Thyroid gland (tissue), 4 donors: ENCODE measurements at regions of chr4 and their contacts with region 1.

Region 1: DNA sequence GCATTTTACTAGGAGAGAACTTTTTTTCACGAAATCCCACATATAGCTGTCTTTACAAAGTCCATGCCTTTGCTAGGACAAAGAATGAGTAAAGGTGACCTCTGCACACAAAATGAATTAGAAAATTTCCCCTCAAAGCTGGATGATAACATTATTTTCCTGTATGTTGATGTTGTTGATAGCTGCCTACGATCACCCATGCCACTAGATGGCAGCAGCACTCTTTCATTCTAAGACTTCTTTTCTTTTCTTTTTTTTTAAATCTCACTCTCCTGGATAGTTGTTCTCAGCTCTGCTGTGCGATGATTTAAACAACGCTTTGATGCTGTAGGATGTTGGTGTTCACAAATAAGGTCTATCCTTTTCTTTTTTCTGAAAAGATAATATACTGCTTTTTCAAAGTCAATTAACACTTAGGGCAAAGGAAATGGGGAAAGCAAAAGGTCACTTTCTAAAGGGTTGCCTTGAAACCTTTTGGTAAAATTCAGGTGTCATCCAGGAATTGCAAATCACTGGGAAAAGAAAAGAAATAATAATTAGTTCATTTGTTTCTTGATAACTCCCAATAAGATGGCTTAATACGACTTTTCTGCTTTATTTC is 266.8 kb downstream of the C4orf33 start:
- DNase-seq: peak; percentile 57 to 62
- H3K4me3 ChIP-seq: no peak overlapping the region
- H3K27ac ChIP-seq: no peak overlapping the region
- H3K4me1 ChIP-seq: no peaks in the 10 kb centered on the region
- H3K27me3 ChIP-seq: no peaks in the 10 kb centered on the region
- CTCF ChIP-seq: peak; percentile 56 to 84 (median 72)
- POLR2A ChIP-seq: no peak

Region 2: DNA sequence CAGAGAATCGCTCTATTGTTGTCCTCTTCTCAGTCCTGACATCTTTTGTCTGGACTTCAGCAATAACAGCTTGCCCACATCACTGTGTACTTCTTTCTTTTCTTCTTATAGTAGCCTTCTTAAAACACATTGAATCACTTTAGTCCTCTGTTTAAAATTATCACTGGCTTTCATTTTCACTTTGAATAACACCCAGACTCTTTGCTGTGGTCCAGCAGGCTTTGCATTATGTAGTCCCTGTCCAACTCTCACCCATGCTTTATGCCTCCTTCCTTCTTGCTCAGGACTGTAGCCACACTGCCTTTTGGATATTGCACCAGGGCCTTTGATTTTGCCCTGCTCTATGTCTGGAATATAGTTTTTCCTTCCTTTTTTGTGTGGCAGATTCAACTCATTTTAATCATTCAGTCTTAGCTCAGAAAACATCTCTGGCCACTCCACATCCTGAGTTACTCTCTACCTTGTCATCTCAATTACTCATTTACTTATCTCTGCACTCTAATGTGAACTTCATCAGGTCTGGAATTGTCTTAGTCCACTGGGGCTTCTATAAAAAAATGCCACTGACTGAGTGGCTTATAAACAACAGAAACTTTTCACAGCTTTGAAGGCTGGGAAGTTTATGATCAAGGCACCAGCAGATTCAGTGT is 98.6 kb before region 1 on chr4:
- intact Hi-C with region 1: no loop called
- DNase-seq: no peak
- H3K4me3 ChIP-seq: no peak overlapping the region
- H3K27ac ChIP-seq: no peak overlapping the region
- H3K4me1 ChIP-seq: no peaks in the 10 kb centered on the region
- H3K27me3 ChIP-seq: no peaks in the 10 kb centered on the region
- CTCF ChIP-seq: no peak
- POLR2A ChIP-seq: no peak

Region 3: GRCh38 chr4:129446074-129446473 is 83.3 kb after region 1 on chr4:
- intact Hi-C with region 1: no loop called
- DNase-seq: no peak
- H3K4me3 ChIP-seq: no peak overlapping the region
- H3K27ac ChIP-seq: no peak overlapping the region
- H3K4me1 ChIP-seq: no peaks in the 10 kb centered on the region
- H3K27me3 ChIP-seq: no peaks in the 10 kb centered on the region
- CTCF ChIP-seq: no peak
- POLR2A ChIP-seq: no peak

Region 4: GRCh38 chr4:129468624-129469023 is 105.8 kb after region 1 on chr4:
- intact Hi-C with region 1: no loop called
- DNase-seq: no peak
- H3K4me3 ChIP-seq: no peak overlapping the region
- H3K27ac ChIP-seq: no peak overlapping the region
- H3K4me1 ChIP-seq: no peaks in the 10 kb centered on the region
- H3K27me3 ChIP-seq: no peaks in the 10 kb centered on the region
- CTCF ChIP-seq: no peak
- POLR2A ChIP-seq: no peak

Region 5: GRCh38 chr4:129641179-129641578 is 278.4 kb after region 1 on chr4:
- intact Hi-C with region 1: loop called (anchors 5 kb)
- DNase-seq: peak; percentile 48 to 62
- H3K4me3 ChIP-seq: no peak overlapping the region
- H3K27ac ChIP-seq: no peak overlapping the region
- H3K4me1 ChIP-seq: no peaks in the 10 kb centered on the region
- H3K27me3 ChIP-seq: no peaks in the 10 kb centered on the region
- CTCF ChIP-seq: peak; percentile 32 to 75 (median 54)
- POLR2A ChIP-seq: no peak